ENCODE measurements at regions of chr3 and their contacts with region 1.

Region 1: DNA sequence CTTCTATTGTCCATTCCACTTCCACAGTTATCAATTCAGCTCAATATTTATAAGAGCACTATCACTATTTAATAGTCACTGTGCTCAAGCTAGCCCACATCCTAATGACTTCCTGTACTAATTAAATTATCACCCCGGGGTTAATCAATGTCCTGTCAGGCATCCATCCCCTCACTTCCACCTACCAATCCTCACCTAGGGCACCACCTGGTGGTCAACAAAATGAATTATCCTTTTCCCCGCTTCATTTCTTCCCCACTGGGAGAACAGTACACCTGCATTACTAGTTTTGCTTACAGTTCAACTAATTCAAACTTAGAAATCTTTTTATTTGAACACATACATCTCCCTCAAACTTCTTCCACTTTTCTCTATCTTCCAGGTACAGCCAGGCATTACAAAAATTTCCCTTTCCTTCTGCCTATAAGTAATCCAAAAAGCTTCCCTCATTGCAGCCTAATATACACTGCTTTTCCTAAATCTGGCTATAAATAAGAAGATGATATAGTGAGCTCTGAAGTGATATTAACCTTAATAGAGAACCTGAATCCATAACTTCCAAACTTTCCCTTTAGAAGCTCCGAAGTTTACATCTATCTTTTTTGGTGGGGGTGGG is 68.5 kb downstream of the TMCC1 start:
- DNase-seq: no peak
- H3K4me3 ChIP-seq: no peak overlapping the region
- H3K27ac ChIP-seq: no peak overlapping the region
- H3K4me1 ChIP-seq: peaks cover 11% of the 10 kb centered on the region
- H3K27me3 ChIP-seq: no peaks in the 10 kb centered on the region
- CTCF ChIP-seq: peak; percentile 54 to 58 (median 56)
- POLR2A ChIP-seq: no peak

Region 2: GRCh38 chr3:129490242-129491045 is 334.6 kb before region 1 on chr3:
- intact Hi-C with region 1: loop called (anchors 10 kb)
- DNase-seq: peak in 1 of 2 donors; percentile 98
- H3K4me3 ChIP-seq: no peak overlapping the region
- H3K27ac ChIP-seq: peak overlapping the region; percentile 94
- H3K4me1 ChIP-seq: peaks cover 33% of the 10 kb centered on the region
- H3K27me3 ChIP-seq: no peaks in the 10 kb centered on the region
- CTCF ChIP-seq: peak; percentile 86 to 91 (median 87)
- POLR2A ChIP-seq: no peak

Region 3: GRCh38 chr3:129627429-129628168 is 197.4 kb before region 1 on chr3:
- intact Hi-C with region 1: loop called (anchors 10 kb)
- DNase-seq: peak in 1 of 2 donors; percentile 94
- H3K4me3 ChIP-seq: peak overlapping the region; percentile 50 to 58
- H3K27ac ChIP-seq: peak overlapping the region; percentile 93
- H3K4me1 ChIP-seq: peaks cover 65% of the 10 kb centered on the region
- H3K27me3 ChIP-seq: no peaks in the 10 kb centered on the region
- CTCF ChIP-seq: peak; percentile 72 to 76 (median 75)
- POLR2A ChIP-seq: peak in 1 of 2 donors; percentile 36

Region 4: GRCh38 chr3:129650256-129650872 is 174.7 kb before region 1 on chr3:
- intact Hi-C with region 1: loop called (anchors 5 kb)
- DNase-seq: peak in 1 of 2 donors; percentile 92
- H3K4me3 ChIP-seq: no peak overlapping the region
- H3K27ac ChIP-seq: no peak overlapping the region
- H3K4me1 ChIP-seq: peaks cover 17% of the 10 kb centered on the region
- H3K27me3 ChIP-seq: no peaks in the 10 kb centered on the region
- CTCF ChIP-seq: peak; percentile 39 to 90 (median 80)
- POLR2A ChIP-seq: no peak

Measured in vagina (tissue), 2 donors.